PC-9 (cell line): ENCODE measurements at regions of chr19 and their contacts with region 1.

Region 1: GRCh38 chr19:17021793-17022583 is 4.6 kb downstream of the CPAMD8 start:
- DNase-seq: peak; percentile 83 to 99
- H3K4me3 ChIP-seq: peak overlapping the region; percentile 29; the same call in 1 of the 2 replicates
- H3K27ac ChIP-seq: peak overlapping the region; percentile 57
- H3K4me1 ChIP-seq: peaks cover 59% of the 10 kb centered on the region
- H3K27me3 ChIP-seq: no peaks in the 10 kb centered on the region
- CTCF ChIP-seq: no peak

Region 2: DNA sequence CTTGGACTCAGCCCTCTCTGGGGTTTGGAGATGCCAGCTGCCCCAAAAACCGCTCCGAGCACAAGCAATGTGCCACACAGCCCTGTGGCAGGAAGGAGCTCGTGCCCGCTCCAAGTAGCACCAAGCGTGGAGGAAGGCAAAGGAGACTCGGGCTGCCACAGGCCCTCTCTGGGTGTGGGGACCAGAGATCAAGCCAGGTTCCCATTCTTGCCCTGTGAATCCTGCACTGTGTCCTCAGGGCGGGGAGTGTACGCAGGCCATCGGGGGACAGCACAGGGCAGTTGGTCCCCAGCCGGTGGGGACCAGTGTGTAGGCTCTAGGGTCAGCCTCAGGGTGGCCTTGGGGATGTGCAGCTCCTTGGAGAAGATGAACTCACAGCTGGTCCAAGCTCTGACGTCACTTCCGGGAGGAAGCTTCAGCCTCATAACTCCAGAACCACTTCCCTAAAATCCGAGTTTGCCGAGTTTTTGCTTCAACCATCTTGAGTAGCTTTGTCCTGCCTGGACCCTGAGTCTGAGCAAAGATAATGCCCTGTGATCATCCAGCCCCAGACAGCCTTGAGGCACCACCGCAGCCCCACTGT is 13.9 kb after region 1 on chr19:
- CTCF ChIA-PET with region 1: no interaction called
- POLR2A ChIA-PET with region 1: interaction called, 30 read pairs
- intact Hi-C with region 1: no loop called
- DNase-seq: no peak
- H3K4me3 ChIP-seq: no peak overlapping the region
- H3K27ac ChIP-seq: no peak overlapping the region
- H3K4me1 ChIP-seq: no peaks in the 10 kb centered on the region
- H3K27me3 ChIP-seq: no peaks in the 10 kb centered on the region
- CTCF ChIP-seq: no peak

Region 3: GRCh38 chr19:17170538-17171297 is 148.7 kb after region 1 on chr19:
- CTCF ChIA-PET with region 1: no interaction called
- POLR2A ChIA-PET with region 1: no interaction called
- intact Hi-C with region 1: no loop called
- DNase-seq: no peak
- H3K4me3 ChIP-seq: no peak overlapping the region
- H3K27ac ChIP-seq: no peak overlapping the region
- H3K4me1 ChIP-seq: peaks cover 11% of the 10 kb centered on the region
- H3K27me3 ChIP-seq: no peaks in the 10 kb centered on the region
- CTCF ChIP-seq: no peak